CD14-positive monocyte (primary cell): ENCODE measurements at regions of chr2 and their contacts with region 1.

Region 1: DNA sequence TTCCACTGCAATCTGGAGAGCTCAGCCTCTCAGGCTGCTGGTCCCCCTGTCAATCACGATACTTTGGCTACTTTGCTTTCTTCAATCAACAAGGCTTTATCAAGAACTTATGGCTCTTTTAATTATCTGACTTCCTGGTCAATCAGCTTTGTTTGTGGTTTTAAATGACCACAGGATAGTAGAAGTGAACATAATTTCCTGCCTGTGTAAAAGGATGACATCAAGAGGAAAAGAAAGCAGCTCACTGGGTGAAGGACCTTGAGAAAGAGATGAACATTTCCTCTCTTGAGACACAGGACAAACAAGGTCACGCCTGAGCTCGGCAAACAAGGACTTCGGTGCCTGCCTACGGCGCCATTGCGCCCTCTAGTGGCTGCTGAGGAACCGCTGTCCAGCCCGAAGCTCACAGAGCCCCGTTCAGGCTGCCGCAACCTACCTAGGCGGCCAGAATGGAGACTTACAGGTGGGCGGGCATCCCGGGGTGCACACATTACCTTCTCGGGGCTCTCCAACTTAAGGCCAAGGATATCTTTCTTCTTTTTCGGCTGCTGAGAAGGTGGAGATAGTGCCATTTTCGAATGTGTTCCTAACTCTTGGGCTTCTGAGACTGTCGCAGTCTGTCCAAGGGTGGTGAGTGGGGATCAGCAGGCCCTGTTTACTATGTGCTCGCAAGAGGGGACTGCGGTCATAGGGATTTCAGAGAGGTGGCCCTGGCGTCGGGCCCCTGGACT is 54.0 kb downstream of the IL1RL2 start:
- DNase-seq: peak; percentile 96 to 99 (median 98)
- H3K4me3 ChIP-seq: peak overlapping the region in 1 of 3 experiments; percentile 43
- H3K4me3 Mint-ChIP-seq: peak overlapping the region in 1 of 2 donors; percentile 67
- H3K27ac ChIP-seq: peak overlapping the region; percentile 18 to 66
- H3K27ac Mint-ChIP-seq: peak overlapping the region; percentile 72 to 95 (median 90)
- H3K4me1 ChIP-seq: peaks cover 21 to 31% of the 10 kb centered on the region in 2 donors
- H3K4me1 Mint-ChIP-seq: peaks cover 42% of the 10 kb centered on the region
- H3K27me3 ChIP-seq: peaks cover 6 to 24% of the 10 kb centered on the region in 2 donors
- H3K27me3 Mint-ChIP-seq: peaks cover 41 to 63% (median 55%) of the 10 kb centered on the region in 3 donors
- CTCF ChIP-seq: peak; percentile 93

Region 2: DNA sequence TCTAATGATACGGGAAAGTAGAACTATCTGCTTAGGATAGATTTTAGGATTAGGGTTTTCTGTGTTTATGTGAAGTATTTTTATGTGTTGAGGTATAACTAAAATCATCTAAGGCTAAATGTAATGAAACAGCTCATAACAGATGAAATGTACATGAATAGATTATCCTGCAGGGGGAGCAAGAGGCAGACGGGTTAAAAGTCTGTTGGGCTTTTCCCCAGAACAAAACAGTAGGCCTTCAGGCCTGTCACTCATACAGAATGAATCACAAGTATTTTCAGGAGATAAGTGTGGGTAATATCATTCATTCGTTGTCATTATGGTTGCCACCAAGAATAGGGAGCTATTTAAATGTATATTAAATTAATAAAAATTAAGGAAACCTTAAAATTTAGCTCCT is 356.9 kb before region 1 on chr2:
- intact Hi-C with region 1: loop called (anchors 5 to 10 kb)
- DNase-seq: peak; percentile 61 to 75 (median 71)
- H3K4me3 ChIP-seq: no peak overlapping the region
- H3K4me3 Mint-ChIP-seq: no peak overlapping the region
- H3K27ac ChIP-seq: no peak overlapping the region
- H3K27ac Mint-ChIP-seq: peak overlapping the region in 3 of 7 donors; percentile 38 to 69 (median 63)
- H3K4me1 ChIP-seq: no peaks in the 10 kb centered on the region
- H3K4me1 Mint-ChIP-seq: peaks cover 2% of the 10 kb centered on the region
- H3K27me3 ChIP-seq: no peaks in the 10 kb centered on the region
- H3K27me3 Mint-ChIP-seq: no peaks in the 10 kb centered on the region
- CTCF ChIP-seq: peak; percentile 75

Region 3: DNA sequence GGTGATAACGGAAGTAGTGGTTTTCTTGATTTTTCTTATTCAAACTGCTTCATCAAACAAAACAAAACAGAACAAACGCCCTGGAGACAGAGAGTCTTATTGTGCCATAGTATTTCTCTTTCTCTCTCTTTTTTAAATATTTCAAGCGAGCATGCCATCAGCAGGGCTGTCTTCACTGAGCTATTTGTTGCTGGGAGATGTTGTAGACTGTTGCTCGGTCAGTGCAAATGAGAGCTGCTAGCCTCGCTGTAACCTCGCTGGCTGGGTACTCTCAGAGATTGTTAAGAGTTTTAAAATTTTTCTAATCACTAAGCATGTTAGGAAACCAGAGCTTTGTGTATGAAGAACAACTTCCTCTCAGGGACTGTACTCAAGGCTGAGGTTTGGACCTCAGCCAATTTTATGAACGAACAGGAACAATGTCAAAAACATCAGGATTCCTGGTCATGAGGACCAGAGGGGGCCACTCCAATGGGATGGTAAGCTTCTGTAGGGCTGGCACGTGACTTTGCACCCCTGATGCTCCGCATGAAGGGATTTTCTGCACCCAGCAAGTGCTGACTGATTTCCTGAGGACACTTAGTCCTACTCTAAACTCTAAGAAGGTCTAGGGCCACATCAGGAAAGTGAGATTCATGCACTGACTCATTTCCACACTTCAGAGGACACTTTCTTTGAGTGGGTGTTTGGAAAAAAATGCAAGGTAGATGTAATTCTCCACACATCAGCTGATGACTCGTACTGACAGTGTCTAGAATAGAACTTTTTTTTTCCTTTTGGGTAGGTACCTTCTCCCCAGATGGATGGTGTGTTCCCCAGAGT is 158.0 kb before region 1 on chr2:
- intact Hi-C with region 1: loop called in 1 of 2 experiments (anchors 5 kb)
- DNase-seq: peak; percentile 90 to 94 (median 91)
- H3K4me3 ChIP-seq: peak overlapping the region in 2 of 3 experiments; percentile 36 to 64
- H3K4me3 Mint-ChIP-seq: peak overlapping the region; percentile 58 to 89
- H3K27ac ChIP-seq: peak overlapping the region; percentile 67 to 94
- H3K27ac Mint-ChIP-seq: peak overlapping the region; percentile 94 to 100 (median 98)
- H3K4me1 ChIP-seq: peaks cover 34 to 44% of the 10 kb centered on the region in 2 donors
- H3K4me1 Mint-ChIP-seq: peaks cover 39% of the 10 kb centered on the region
- H3K27me3 ChIP-seq: no peaks in the 10 kb centered on the region
- H3K27me3 Mint-ChIP-seq: peaks cover 1 to 8% (median 2%) of the 10 kb centered on the region in 3 donors
- CTCF ChIP-seq: no peak

Region 4: GRCh38 chr2:102103992-102104871 is 136.6 kb before region 1 on chr2:
- intact Hi-C with region 1: no loop called
- DNase-seq: peak; percentile 86 to 96 (median 93)
- H3K4me3 ChIP-seq: peak overlapping the region; percentile 16 to 57 (median 40)
- H3K4me3 Mint-ChIP-seq: peak overlapping the region; percentile 80 to 95
- H3K27ac ChIP-seq: peak overlapping the region in 1 of 2 donors; percentile 39
- H3K27ac Mint-ChIP-seq: peak overlapping the region; percentile 72 to 92 (median 83)
- H3K4me1 ChIP-seq: peaks cover 11 to 13% of the 10 kb centered on the region in 2 donors
- H3K4me1 Mint-ChIP-seq: peaks cover 19% of the 10 kb centered on the region
- H3K27me3 ChIP-seq: no peaks in the 10 kb centered on the region
- H3K27me3 Mint-ChIP-seq: peaks cover 3 to 10% (median 9%) of the 10 kb centered on the region in 3 donors
- CTCF ChIP-seq: no peak

Region 5: GRCh38 chr2:102172745-102173144 is 68.1 kb before region 1 on chr2:
- intact Hi-C with region 1: no loop called
- DNase-seq: peak; percentile 15 to 49 (median 23)
- H3K4me3 ChIP-seq: peak overlapping the region in 1 of 3 experiments; percentile 38
- H3K4me3 Mint-ChIP-seq: peak overlapping the region in 1 of 2 donors; percentile 49
- H3K27ac ChIP-seq: peak overlapping the region in 1 of 2 donors; percentile 35
- H3K27ac Mint-ChIP-seq: peak overlapping the region; percentile 32 to 90 (median 83)
- H3K4me1 ChIP-seq: peaks cover 17 to 18% of the 10 kb centered on the region in 2 donors
- H3K4me1 Mint-ChIP-seq: peaks cover 26% of the 10 kb centered on the region
- H3K27me3 ChIP-seq: no peaks in the 10 kb centered on the region
- H3K27me3 Mint-ChIP-seq: peaks cover 0 to 3% (median 2%) of the 10 kb centered on the region in 3 donors
- CTCF ChIP-seq: no peak

Region 6: DNA sequence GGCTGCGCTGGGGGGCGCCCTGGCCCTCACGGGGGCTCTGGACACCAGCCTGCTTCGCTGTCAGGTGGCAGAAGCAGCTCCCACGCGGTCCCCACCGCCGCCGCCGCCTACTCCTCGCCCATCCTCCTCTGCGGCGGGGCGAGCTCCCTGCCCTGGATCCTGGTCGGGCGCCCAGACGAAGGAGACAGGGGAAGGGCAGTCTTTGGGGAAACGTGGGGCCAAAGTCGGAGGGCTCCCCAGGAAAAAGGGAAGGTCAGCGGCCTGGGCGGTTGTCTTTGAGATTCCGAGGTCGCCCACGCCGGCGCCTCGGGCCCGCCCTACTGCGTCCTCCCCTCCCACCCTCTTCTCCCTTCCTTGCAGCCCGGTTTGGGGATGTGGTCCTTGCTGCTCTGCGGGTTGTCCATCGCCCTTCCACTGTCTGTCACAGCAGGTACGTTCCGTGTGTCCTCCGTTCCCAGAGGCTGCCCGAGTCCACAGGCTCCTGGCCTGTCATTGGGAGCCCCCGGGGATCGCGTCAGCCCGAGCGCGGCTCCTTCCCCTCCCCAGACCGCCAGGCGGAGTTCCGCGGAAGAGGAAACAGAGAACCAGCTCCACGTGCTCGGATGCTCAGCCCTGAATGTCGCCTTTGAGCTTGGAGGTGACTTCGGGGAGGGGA is 53.2 kb before region 1 on chr2:
- intact Hi-C with region 1: loop called in 1 of 2 experiments (anchors 5 kb)
- DNase-seq: peak; percentile 68 to 79 (median 71)
- H3K4me3 ChIP-seq: peak overlapping the region in 2 of 3 experiments; percentile 36 to 63
- H3K4me3 Mint-ChIP-seq: peak overlapping the region; percentile 82 to 95
- H3K27ac ChIP-seq: no peak overlapping the region
- H3K27ac Mint-ChIP-seq: peak overlapping the region in 6 of 7 donors; percentile 80 to 94 (median 90)
- H3K4me1 ChIP-seq: peaks cover 10 to 13% of the 10 kb centered on the region in 2 donors
- H3K4me1 Mint-ChIP-seq: peaks cover 7% of the 10 kb centered on the region
- H3K27me3 ChIP-seq: peaks cover 3 to 18% of the 10 kb centered on the region in 2 donors
- H3K27me3 Mint-ChIP-seq: peaks cover 15 to 31% (median 17%) of the 10 kb centered on the region in 3 donors
- CTCF ChIP-seq: peak; percentile 37

Region 7: DNA sequence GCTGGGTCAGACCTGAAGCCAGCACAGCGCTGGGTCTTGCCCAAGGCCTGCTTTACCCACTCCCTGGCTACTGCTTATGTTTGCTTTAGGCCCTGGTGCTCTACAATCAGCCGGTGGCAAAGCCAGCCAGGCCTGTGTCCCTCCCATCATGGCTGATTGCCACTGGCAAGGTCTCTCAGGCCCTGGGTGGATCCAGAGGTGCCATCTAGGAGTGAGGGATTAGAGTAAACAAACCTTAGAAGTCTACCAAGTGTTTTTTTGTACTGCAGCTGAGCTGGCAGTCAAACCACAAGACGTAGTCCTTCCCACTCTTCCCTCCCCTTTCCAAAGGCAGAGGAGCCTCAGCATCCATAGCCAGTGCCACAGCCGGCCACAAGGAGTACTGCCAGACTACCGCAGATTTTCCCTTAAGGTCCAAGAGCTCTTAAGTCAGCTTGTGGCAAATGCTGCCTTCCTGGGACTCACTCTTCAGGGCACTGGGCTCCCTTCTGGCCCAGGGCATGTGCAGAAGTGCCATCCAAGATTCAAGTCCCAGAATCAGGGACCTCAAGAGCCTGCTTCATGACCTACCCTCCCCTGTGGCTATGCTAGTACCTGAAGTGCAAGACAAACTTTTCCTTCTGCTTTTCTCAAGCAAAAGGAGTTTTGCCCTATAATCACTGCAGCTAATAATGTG is 34.0 kb before region 1 on chr2:
- intact Hi-C with region 1: no loop called
- DNase-seq: no peak
- H3K4me3 ChIP-seq: no peak overlapping the region
- H3K4me3 Mint-ChIP-seq: no peak overlapping the region
- H3K27ac ChIP-seq: no peak overlapping the region
- H3K27ac Mint-ChIP-seq: no peak overlapping the region
- H3K4me1 ChIP-seq: no peaks in the 10 kb centered on the region
- H3K4me1 Mint-ChIP-seq: peaks cover 1% of the 10 kb centered on the region
- H3K27me3 ChIP-seq: no peaks in the 10 kb centered on the region
- H3K27me3 Mint-ChIP-seq: peaks cover 0 to 3% (median 0%) of the 10 kb centered on the region in 3 donors
- CTCF ChIP-seq: no peak

Region 8: GRCh38 chr2:102355526-102356380 is 114.9 kb after region 1 on chr2 and contains the start of gene IL18R1:
- intact Hi-C with region 1: loop called in 1 of 2 experiments (anchors 5 kb)
- DNase-seq: peak; percentile 43 to 75 (median 55)
- H3K4me3 ChIP-seq: peak within 1 kb of the TSS; percentile 38 to 72 (median 43)
- H3K4me3 Mint-ChIP-seq: peak within 1 kb of the TSS; percentile 78 to 93
- H3K27ac ChIP-seq: no peak within 1 kb of the TSS
- H3K27ac Mint-ChIP-seq: peak within 1 kb of the TSS in 1 of 7 donors; percentile 11
- H3K4me1 ChIP-seq: peaks cover 21 to 33% of the 10 kb centered on the region in 2 donors
- H3K4me1 Mint-ChIP-seq: peaks cover 21% of the 10 kb centered on the region
- H3K27me3 ChIP-seq: peaks cover 14 to 22% of the 10 kb centered on the region in 2 donors
- H3K27me3 Mint-ChIP-seq: peaks cover 28 to 40% (median 33%) of the 10 kb centered on the region in 3 donors
- CTCF ChIP-seq: peak; percentile 93
- polyA plus RNA-seq, gene IL18R1: 0.03 to 0.15 (median 0.11) TPM